ENCODE measurements at regions of chr22 and their contacts with region 1.

Region 1: GRCh38 chr22:20130739-20131596 is 636 bp upstream of the ZDHHC8 start:
- DNase-seq: peak; percentile 92
- H3K4me3 Mint-ChIP-seq: peak overlapping the region; percentile 52
- H3K27ac Mint-ChIP-seq: no peak overlapping the region
- H3K4me1 Mint-ChIP-seq: peaks cover 13% of the 10 kb centered on the region
- H3K27me3 Mint-ChIP-seq: no peaks in the 10 kb centered on the region

Region 2: DNA sequence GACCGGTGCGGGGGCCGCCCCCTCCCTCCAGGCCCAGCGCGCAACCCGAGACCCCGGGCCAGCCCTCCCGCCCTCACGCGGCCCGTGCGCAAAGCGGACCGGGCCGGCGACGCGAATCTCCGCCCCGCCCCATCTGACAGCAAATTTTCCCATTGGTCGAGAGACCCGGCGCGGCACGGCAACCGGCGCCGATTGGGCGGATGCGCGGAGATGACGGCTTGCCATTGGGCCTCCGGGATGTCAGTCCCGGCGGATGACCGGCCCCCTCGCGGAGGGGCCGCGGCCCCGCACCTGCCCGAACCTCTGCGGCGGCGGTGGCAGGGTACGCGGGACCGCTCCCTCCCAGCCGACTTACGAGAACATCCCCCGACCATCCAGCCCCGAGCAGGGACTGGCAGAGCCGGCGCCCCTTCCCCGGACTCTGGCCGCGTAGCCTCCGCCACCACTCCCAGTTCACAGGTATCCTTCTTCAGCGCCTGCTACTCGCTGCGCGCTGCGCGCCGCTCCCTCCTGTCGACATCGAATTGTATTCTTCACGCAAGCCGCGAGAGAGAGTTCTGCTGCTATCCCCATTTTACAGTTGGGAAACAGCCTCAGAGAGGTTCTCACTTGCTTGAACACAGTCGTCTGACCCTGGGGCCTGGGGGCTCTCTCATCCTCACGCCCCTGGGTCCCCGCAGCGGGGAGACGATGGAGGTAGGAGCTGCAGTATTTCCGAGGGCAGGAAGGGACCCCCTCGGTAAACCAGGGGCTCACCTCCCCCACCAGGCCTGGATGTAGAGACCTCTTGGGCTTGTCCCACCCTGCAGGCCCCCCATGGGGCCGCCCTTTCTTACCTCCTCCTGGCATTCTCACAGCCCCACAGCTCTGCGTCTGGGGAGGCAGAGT is 114.0 kb before region 1 on chr22 and contains the start of gene ARVCF:
- intact Hi-C with region 1: loop called (anchors 5 kb)
- DNase-seq: peak; percentile 98
- H3K4me3 Mint-ChIP-seq: peak within 1 kb of the TSS; percentile 89
- H3K27ac Mint-ChIP-seq: no peak within 1 kb of the TSS
- H3K4me1 Mint-ChIP-seq: peaks cover 16% of the 10 kb centered on the region
- H3K27me3 Mint-ChIP-seq: peaks cover 25% of the 10 kb centered on the region
- total RNA-seq, gene ARVCF: 2.6 and 4.1 TPM in 2 replicates

Measured in activated CD4-positive, alpha-beta T cell treated with anti-CD3 and anti-CD28 coated beads, Interleukin-2, amount 10 ng/mL, durations not matched to agents 24 days and 14 days (primary cell).